SK-N-SH (cell line): ENCODE measurements at regions of chr11 and their contacts with region 1.

Region 1: GRCh38 chr11:22787551-22788162 is 41.9 kb downstream of the SVIP start:
- DNase-seq: peak; percentile 46
- H3K4me3 ChIP-seq: no peak overlapping the region
- H3K27ac ChIP-seq: no peak overlapping the region
- H3K4me1 ChIP-seq: peaks cover 0 to 15% of the 10 kb centered on the region in 2 experiments; a peak in 2 of 4 replicates
- H3K27me3 ChIP-seq: no peaks in the 10 kb centered on the region
- CTCF ChIP-seq: peak; percentile 83
- EP300 ChIP-seq: no peak
- RAD21 ChIP-seq: peak; percentile 86

Region 2: GRCh38 chr11:22244986-22245592 is 542.6 kb before region 1 on chr11:
- CTCF ChIA-PET with region 1: interaction called, 12 read pairs
- POLR2A ChIA-PET with region 1: no interaction called
- DNase-seq: peak; percentile 18
- H3K4me3 ChIP-seq: no peak overlapping the region
- H3K27ac ChIP-seq: no peak overlapping the region
- H3K4me1 ChIP-seq: no peaks in the 10 kb centered on the region
- H3K27me3 ChIP-seq: no peaks in the 10 kb centered on the region
- CTCF ChIP-seq: peak; percentile 69
- EP300 ChIP-seq: no peak
- RAD21 ChIP-seq: peak; percentile 72

Region 3: GRCh38 chr11:22331771-22332170 is 455.9 kb before region 1 on chr11:
- CTCF ChIA-PET with region 1: interaction called, 20 read pairs
- POLR2A ChIA-PET with region 1: no interaction called
- DNase-seq: no peak
- H3K4me3 ChIP-seq: no peak overlapping the region
- H3K27ac ChIP-seq: no peak overlapping the region
- H3K4me1 ChIP-seq: no peaks in the 10 kb centered on the region
- H3K27me3 ChIP-seq: no peaks in the 10 kb centered on the region
- CTCF ChIP-seq: no peak
- EP300 ChIP-seq: no peak
- RAD21 ChIP-seq: no peak

Region 4: DNA sequence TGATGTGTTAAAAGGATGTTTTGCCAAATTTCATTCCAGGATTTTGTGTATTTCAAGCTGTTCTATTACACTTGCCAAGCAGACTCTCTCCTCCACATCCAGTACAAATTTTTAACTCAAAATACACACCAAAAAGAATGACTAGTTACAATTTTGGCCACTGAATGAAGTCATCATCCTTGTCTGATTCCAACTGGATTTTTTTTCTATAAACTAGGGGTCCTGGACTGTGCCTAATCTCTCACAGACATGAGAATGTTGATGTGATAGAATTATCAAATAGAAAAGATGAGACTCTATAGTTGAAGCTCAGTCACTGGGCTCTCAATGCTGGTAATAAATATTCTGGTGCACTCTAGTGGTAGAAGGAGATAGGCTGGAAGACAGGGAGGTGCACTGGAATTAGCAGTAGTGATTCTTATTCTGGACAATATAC is 247.8 kb before region 1 on chr11:
- CTCF ChIA-PET with region 1: interaction called, 34 read pairs
- POLR2A ChIA-PET with region 1: no interaction called
- DNase-seq: peak; percentile 33
- H3K4me3 ChIP-seq: no peak overlapping the region; a peak in 1 of 4 replicates
- H3K27ac ChIP-seq: no peak overlapping the region
- H3K4me1 ChIP-seq: no peaks in the 10 kb centered on the region
- H3K27me3 ChIP-seq: no peaks in the 10 kb centered on the region
- CTCF ChIP-seq: peak; percentile 64
- EP300 ChIP-seq: no peak
- RAD21 ChIP-seq: peak; percentile 90

Region 5: DNA sequence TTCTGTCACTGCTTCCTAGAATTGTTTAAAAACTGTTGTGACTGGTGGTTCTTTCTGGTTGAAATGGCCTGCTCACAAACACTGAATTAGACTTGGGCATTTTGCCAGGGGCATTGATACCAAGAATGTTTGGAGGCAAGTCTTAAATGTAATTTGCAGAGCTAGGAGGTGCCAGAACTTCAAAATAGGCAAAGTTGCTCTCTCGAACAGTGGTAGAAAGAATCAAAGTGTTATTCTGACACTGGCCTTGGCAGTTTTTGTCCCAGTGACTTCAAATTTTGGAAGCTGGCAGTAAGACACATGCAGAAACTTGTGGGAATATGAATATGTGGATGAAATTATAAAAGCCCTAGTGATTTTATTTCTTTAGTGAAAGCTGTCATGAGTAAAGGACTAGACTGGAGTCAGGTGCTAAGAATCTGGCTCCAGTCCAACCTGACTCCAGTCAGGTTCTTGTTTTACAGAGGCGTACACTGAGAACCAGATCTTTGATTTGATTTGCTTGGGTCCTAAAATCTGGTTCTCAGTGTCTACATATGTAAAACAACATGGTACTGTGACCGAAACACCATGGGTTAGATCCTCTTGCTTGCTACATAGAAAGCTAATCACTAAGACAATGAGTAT is 21.0 kb after region 1 on chr11:
- CTCF ChIA-PET with region 1: interaction called, 19 read pairs
- POLR2A ChIA-PET with region 1: no interaction called
- DNase-seq: no peak
- H3K4me3 ChIP-seq: no peak overlapping the region
- H3K27ac ChIP-seq: peak overlapping the region in 1 of 2 experiments; percentile 19; a peak in 1 of 4 replicates
- H3K4me1 ChIP-seq: peaks cover 0 to 15% of the 10 kb centered on the region in 2 experiments; a peak in 1 of 4 replicates
- H3K27me3 ChIP-seq: no peaks in the 10 kb centered on the region
- CTCF ChIP-seq: no peak
- EP300 ChIP-seq: no peak
- RAD21 ChIP-seq: no peak

Region 6: DNA sequence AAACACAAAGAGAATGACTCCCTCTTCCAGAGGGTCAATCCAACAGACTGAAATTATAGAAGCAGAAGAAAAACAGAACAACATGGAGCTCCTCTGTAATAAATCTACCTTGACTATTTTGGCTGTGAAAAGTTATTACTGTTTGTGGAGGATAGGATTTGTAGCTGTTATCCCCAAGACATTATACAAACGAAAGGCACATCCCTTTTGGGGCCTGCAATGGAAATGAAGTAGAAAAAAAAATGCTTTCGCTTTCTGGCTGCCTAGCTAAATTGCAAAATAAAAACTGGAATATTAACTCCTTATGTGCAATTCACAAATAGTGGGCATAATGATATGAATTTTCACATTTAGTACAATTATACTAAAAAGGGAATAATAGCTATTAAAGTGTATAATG is 196.4 kb after region 1 on chr11:
- CTCF ChIA-PET with region 1: no interaction called
- POLR2A ChIA-PET with region 1: no interaction called
- DNase-seq: no peak
- H3K4me3 ChIP-seq: no peak overlapping the region
- H3K27ac ChIP-seq: no peak overlapping the region
- H3K4me1 ChIP-seq: no peaks in the 10 kb centered on the region
- H3K27me3 ChIP-seq: no peaks in the 10 kb centered on the region
- CTCF ChIP-seq: no peak
- EP300 ChIP-seq: no peak
- RAD21 ChIP-seq: no peak